ENCODE measurements at regions of chr16 and their contacts with region 1.

Region 1: DNA sequence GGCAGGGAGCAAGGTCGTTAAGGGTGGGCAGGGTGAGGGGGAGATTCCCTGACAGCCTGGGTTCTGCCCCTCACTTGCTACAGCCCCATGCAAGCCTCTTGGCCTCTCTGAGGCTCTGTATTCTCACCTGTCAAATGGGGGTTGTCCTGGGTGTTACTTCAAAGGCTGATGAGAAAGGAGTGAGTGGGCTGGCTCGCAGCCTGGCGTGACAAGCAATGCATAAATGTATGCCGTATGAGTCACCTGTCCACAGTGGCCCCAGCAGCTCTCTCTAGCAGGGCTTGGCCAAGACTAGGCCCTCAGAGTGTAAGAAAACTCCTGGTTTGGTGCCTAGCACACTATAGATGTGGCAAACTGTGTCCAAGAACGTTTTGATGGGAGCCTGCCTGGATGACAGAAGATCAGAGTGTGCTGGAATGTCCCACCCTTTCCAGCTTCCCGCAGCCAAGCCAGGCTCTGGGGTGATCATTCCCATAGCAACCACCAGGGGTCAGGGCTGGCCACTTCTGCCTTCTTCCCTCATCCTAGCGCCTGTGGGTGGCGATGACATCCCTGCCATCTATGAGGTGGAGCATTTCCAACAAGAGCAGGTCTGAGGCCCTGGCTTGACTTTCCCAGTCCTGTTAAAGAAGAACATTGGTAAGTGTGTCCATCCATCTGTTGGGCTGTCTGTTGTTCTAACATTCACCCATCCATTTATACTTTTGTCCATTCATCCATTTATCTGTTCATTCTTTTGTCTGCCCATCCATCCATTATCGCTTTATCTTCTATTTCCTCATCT is 37.2 kb upstream of the ADGRG1 start:
- DNase-seq: peak; percentile 59 to 80 (median 66)
- H3K4me3 ChIP-seq: no peak overlapping the region
- H3K4me3 Mint-ChIP-seq: peak overlapping the region in 1 of 2 donors; percentile 42
- H3K27ac ChIP-seq: no peak overlapping the region
- H3K27ac Mint-ChIP-seq: peak overlapping the region in 4 of 7 donors; percentile 23 to 76 (median 60)
- H3K4me1 ChIP-seq: peaks cover 20 to 25% of the 10 kb centered on the region in 2 donors
- H3K4me1 Mint-ChIP-seq: peaks cover 20% of the 10 kb centered on the region
- H3K27me3 ChIP-seq: peaks cover 0 to 2% of the 10 kb centered on the region in 2 donors
- H3K27me3 Mint-ChIP-seq: peaks cover 8 to 19% (median 17%) of the 10 kb centered on the region in 3 donors
- CTCF ChIP-seq: peak; percentile 96

Region 2: DNA sequence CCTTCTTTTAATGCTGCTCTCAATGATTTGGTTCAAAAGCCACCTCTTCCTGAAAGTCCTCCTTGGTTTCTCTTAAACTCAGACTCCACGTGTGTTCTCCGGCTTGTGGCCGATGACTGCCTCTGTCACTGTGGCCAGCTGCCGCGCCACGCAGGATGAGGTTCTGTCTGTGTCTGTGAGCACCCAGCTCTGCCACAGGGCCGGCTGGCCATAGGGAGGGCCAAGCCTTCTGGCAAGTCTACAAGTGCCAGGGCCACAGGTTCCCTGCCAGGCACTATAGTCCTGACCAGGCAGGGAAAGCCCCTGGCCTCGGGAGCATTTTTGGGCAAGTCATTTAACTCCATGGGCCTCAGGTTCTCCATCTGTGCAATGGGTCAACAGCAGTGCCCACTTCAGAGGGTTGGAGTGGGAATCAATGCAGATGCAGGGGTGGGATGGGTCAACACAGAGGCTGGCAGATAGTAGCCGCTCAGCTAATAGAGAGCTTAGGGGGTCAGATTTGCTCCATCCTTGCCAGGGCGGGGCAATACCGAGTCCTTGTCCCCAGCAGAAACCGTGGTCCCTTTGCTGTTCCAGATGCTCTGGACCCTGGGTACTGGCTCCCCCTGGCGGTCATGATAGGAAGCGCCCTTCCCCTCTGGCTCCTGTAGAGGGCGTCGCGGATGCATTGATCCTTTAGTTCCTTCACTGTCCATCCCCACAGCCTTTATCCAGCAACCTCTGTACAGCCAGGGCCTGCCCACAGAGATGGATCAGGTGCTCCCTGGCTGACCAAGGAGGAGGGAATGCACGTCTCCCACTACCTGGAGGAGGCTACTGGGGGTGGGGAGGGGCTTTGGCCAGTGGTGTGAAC is 57.5 kb after region 1 on chr16:
- intact Hi-C with region 1: loop called (anchors 1 to 5 kb)
- DNase-seq: peak; percentile 82 to 86 (median 83)
- H3K4me3 ChIP-seq: no peak overlapping the region
- H3K4me3 Mint-ChIP-seq: no peak overlapping the region
- H3K27ac ChIP-seq: peak overlapping the region; percentile 48 to 58
- H3K27ac Mint-ChIP-seq: peak overlapping the region; percentile 26 to 93 (median 83)
- H3K4me1 ChIP-seq: peaks cover 24 to 25% of the 10 kb centered on the region in 2 donors
- H3K4me1 Mint-ChIP-seq: peaks cover 25% of the 10 kb centered on the region
- H3K27me3 ChIP-seq: peaks cover 2 to 34% of the 10 kb centered on the region in 2 donors
- H3K27me3 Mint-ChIP-seq: peaks cover 23 to 39% (median 32%) of the 10 kb centered on the region in 3 donors
- CTCF ChIP-seq: peak; percentile 100

Region 3: DNA sequence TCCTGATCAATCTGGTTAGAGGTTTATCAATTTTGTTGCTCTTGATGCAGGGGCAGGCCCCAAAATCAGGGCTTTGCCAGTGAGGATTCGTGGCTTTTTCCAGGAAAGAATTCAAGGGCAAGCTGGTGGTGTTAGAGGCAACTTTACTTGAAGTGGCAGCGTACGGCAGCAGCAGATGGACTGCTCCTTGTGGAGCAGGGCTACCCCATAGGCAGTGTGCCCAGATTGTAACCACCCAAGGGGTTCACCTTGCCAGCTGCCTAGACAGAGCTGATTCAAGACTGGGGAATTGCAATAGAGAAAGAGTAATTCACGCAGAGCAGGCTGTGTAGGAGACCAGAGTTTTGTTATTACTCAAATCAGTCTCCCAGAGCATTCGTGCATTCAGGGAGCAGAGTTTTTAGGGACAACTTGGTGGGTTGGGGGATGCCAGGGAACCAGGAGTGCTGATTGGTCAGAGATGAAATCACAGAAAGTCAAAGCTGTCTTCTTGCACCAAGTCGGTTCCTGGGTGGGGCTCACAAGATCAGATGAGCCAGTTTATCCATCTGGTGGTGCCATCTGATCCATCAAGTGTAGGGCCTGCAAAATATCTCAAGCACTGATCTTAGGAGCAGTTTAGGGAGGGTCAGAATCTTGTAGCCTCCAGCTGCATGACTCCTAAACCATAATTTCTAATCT is 120.2 kb after region 1 on chr16:
- intact Hi-C with region 1: loop called in 1 of 2 experiments (anchors 5 kb)
- DNase-seq: no peak
- H3K4me3 ChIP-seq: no peak overlapping the region
- H3K4me3 Mint-ChIP-seq: no peak overlapping the region
- H3K27ac ChIP-seq: no peak overlapping the region
- H3K27ac Mint-ChIP-seq: no peak overlapping the region
- H3K4me1 ChIP-seq: no peaks in the 10 kb centered on the region
- H3K4me1 Mint-ChIP-seq: no peaks in the 10 kb centered on the region
- H3K27me3 ChIP-seq: no peaks in the 10 kb centered on the region
- H3K27me3 Mint-ChIP-seq: peaks cover 0 to 3% (median 2%) of the 10 kb centered on the region in 3 donors
- CTCF ChIP-seq: no peak

Measured in CD14-positive monocyte (primary cell).